ENCODE measurements at regions of chr14 and their contacts with region 1.

Region 1: DNA sequence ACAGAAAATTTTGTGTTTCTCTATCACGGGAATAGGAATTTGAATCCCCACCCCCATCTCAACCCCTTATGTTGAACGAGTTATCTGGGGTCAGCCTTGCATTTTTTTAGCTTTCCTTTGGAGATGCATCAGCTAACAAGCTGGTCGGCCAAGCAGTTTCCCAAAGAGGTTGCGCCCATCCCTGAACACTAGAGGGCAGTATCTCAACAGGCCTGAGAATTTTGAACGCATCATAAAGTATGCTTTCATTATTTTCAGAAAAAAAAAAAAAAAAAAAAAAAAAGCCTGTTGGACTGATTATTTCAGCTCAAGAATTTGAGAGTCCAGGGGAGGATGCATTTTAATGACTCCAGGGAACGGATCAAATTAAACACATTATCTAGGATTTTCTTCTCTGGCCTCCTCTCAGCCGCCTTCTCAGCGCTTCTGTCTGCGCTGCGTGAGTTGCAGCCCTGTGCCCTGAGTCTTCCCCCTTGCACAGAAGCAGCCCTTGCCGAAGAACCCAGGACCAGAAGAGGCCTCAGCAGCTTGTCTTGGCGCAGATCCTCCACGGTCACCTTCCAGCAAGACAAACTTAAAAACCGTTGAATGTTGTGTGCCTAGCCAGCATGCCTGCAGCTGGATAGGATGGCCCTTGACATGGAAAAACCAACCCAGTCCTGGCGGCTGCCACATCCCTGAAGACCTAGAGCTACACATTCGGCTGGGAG is 76.6 kb upstream of the GZMB start:
- DNase-seq: peak; percentile 76
- ATAC-seq: peak; percentile 84
- H3K4me3 Mint-ChIP-seq: no peak overlapping the region
- H3K27ac Mint-ChIP-seq: no peak overlapping the region
- H3K4me1 Mint-ChIP-seq: peaks cover 2% of the 10 kb centered on the region
- H3K27me3 Mint-ChIP-seq: peaks cover 2% of the 10 kb centered on the region
- CTCF ChIP-seq: peak; percentile 80

Region 2: GRCh38 chr14:24630872-24631477 is 79.6 kb before region 1 on chr14:
- CTCF ChIA-PET with region 1: interaction called, 16 read pairs
- POLR2A ChIA-PET with region 1: no interaction called
- intact Hi-C with region 1: no loop called
- DNase-seq: no peak
- ATAC-seq: no peak
- H3K4me3 Mint-ChIP-seq: peak overlapping the region; percentile 93
- H3K27ac Mint-ChIP-seq: peak overlapping the region; percentile 95
- H3K4me1 Mint-ChIP-seq: peaks cover 43% of the 10 kb centered on the region
- H3K27me3 Mint-ChIP-seq: no peaks in the 10 kb centered on the region
- CTCF ChIP-seq: no peak

Region 3: DNA sequence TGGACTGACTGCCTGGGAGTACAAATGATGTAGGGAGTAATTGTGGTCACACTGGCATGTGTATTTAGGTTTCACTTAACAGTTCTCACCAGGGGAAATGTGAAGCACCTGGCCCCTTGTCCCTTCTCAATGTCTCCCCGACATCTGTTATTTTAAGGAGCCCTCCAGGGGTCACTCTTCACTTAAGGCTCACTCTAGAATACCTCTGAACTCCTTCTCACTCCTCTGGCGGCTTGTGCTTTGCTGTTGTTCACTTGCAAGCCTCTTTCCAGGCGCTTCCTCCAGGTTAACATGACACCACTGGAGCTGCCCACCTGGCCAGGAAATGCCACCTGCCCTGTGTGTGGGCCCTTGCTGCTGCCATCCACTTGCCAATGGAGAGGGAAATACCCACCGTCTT is 20.1 kb before region 1 on chr14:
- CTCF ChIA-PET with region 1: interaction called, 23 read pairs
- POLR2A ChIA-PET with region 1: interaction called, 3 read pairs
- intact Hi-C with region 1: no loop called
- DNase-seq: peak; percentile 51
- ATAC-seq: no peak
- H3K4me3 Mint-ChIP-seq: no peak overlapping the region
- H3K27ac Mint-ChIP-seq: no peak overlapping the region
- H3K4me1 Mint-ChIP-seq: peaks cover 32% of the 10 kb centered on the region
- H3K27me3 Mint-ChIP-seq: no peaks in the 10 kb centered on the region
- CTCF ChIP-seq: peak; percentile 21

Region 4: GRCh38 chr14:24721775-24722174 is 11.2 kb after region 1 on chr14:
- CTCF ChIA-PET with region 1: interaction called, 20 read pairs
- POLR2A ChIA-PET with region 1: no interaction called
- intact Hi-C with region 1: no loop called
- DNase-seq: no peak
- ATAC-seq: no peak
- H3K4me3 Mint-ChIP-seq: no peak overlapping the region
- H3K27ac Mint-ChIP-seq: no peak overlapping the region
- H3K4me1 Mint-ChIP-seq: no peaks in the 10 kb centered on the region
- H3K27me3 Mint-ChIP-seq: peaks cover 18% of the 10 kb centered on the region
- CTCF ChIP-seq: no peak

Region 5: DNA sequence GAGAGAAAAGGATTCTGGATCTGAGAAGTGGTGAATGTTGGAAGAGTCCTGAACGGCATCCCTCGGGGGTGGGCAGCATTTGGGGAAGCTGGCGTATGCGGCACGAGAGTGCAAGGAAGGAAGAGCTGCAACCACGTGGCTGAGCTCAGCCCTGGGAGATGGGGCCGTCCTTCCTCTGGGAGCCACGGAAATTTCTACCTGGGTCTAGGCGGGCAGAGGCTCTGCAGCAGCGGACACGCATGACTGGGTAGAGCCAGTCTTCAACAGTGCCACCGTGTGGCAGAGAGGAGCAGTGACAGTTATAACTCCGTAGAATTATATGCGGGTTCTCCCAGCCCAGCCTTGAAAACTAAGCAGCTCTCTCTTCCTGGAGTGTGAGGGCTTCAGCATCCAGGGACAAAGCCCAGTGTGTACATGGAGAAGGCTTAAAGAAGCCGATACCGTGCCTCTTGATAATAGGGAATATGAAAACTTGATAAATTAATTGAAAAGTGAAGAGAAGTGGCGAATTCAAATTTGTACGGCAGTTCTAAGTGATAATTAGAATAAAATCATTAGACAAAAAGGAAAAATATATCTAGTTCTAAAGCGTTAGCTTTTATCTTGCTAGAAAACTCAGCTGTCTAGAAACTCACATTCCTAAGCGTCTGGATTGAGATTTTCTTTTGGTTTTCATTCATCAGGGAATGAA is 422.3 kb after region 1 on chr14:
- CTCF ChIA-PET with region 1: interaction called, 18 read pairs
- POLR2A ChIA-PET with region 1: no interaction called
- intact Hi-C with region 1: loop called (anchors 5 kb)
- DNase-seq: peak; percentile 62
- ATAC-seq: peak; percentile 96
- H3K4me3 Mint-ChIP-seq: no peak overlapping the region
- H3K27ac Mint-ChIP-seq: no peak overlapping the region
- H3K4me1 Mint-ChIP-seq: peaks cover 4% of the 10 kb centered on the region
- H3K27me3 Mint-ChIP-seq: peaks cover 33% of the 10 kb centered on the region
- CTCF ChIP-seq: peak; percentile 77

Measured in activated CD8-positive, alpha-beta T cell treated with anti-CD3 and anti-CD28 coated beads for 36 hours (primary cell).